ENCODE measurements at regions of chr9 and their contacts with region 1.

Region 1: GRCh38 chr9:4842734-4843133 is 50.0 kb downstream of the RCL1 start:
- DNase-seq: no peak
- ATAC-seq: no peak

Region 2: DNA sequence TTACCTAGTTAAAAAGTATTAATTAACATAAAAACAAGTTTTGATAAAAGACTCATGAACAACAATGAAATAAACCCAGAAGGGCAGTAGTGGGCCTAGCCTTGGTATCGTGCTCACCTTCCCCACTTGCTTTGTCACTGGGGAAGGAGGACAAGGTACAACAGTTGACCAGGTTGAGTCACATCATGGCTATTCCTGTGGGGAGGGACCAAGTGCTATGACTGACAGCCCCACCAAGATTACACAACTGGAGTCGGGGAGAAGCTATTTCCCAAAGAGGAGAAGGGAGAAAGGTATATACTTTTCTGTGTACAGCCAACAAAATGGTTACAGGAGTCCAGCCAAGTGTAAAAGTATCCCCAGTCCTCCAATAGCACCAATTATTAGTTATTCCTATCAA is 1065.6 kb before region 1 on chr9:
- intact Hi-C with region 1: loop called (anchors 5 kb)
- DNase-seq: no peak
- ATAC-seq: no peak

Region 3: GRCh38 chr9:4873066-4873465 is 30.3 kb after region 1 on chr9:
- intact Hi-C with region 1: no loop called
- DNase-seq: no peak
- ATAC-seq: no peak